ENCODE measurements at regions of chr2 and their contacts with region 1.

Region 1: GRCh38 chr2:190972858-190973257 is 41.1 kb downstream of the STAT1 start:
- DNase-seq: no peak
- H3K4me3 ChIP-seq: no peak overlapping the region
- H3K27ac ChIP-seq: no peak overlapping the region
- H3K4me1 ChIP-seq: peaks cover 1% of the 10 kb centered on the region; the same call in 1 of the 2 replicates
- H3K27me3 ChIP-seq: no peaks in the 10 kb centered on the region
- CTCF ChIP-seq: no peak

Region 2: GRCh38 chr2:190911813-190912212 is 61.0 kb before region 1 on chr2:
- CTCF ChIA-PET with region 1: no interaction called
- POLR2A ChIA-PET with region 1: no interaction called
- intact Hi-C with region 1: no loop called
- DNase-seq: no peak
- H3K4me3 ChIP-seq: no peak overlapping the region
- H3K27ac ChIP-seq: no peak overlapping the region
- H3K4me1 ChIP-seq: no peaks in the 10 kb centered on the region
- H3K27me3 ChIP-seq: no peaks in the 10 kb centered on the region
- CTCF ChIP-seq: no peak

Region 3: DNA sequence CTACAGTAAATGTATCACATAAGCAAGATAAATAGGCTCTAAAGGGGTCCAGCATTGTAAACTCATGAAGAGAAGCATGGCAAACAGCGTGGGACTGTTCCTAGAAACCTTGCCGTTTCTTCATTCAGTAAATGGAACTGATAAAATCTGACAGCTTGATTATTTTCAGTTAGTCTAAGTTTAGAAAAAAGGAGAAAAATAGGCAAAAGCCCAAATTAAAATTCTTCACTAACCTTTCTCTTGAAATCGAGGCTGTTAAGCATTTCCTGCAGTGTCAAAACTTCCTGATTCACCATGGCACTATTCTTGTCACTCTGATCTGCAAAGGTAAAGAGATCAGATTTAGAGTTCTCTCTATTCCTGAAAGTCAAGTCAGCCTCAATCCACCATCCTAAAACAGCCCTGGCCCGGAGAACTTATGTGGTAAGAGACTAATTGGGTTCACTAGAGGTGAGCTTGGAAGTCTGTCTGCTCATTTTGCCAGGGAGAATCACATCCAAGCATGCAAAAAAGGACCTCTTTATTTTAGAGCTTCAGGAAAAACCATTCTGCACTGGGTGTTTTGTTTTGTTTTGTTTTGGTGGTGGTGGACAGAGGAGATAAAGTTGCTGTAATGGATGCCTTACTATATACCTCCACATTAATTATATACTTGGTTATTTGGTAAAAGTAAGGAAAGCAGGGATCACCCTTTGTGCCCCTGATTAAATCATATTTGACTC is 93.5 kb after region 1 on chr2:
- CTCF ChIA-PET with region 1: no interaction called
- POLR2A ChIA-PET with region 1: interaction called, 15 read pairs
- intact Hi-C with region 1: no loop called
- DNase-seq: no peak
- H3K4me3 ChIP-seq: no peak overlapping the region
- H3K27ac ChIP-seq: no peak overlapping the region
- H3K4me1 ChIP-seq: no peaks in the 10 kb centered on the region
- H3K27me3 ChIP-seq: no peaks in the 10 kb centered on the region
- CTCF ChIP-seq: no peak

Region 4: GRCh38 chr2:191637182-191638078 is 664.6 kb after region 1 on chr2:
- CTCF ChIA-PET with region 1: no interaction called
- POLR2A ChIA-PET with region 1: no interaction called
- intact Hi-C with region 1: no loop called
- DNase-seq: peak in 1 of 2 experiments; percentile 91
- H3K4me3 ChIP-seq: peak overlapping the region; percentile 47
- H3K27ac ChIP-seq: peak overlapping the region; percentile 100
- H3K4me1 ChIP-seq: peaks cover 72% of the 10 kb centered on the region
- H3K27me3 ChIP-seq: no peaks in the 10 kb centered on the region
- CTCF ChIP-seq: no peak

Measured in PC-9 (cell line).